ENCODE measurements at regions of chr21 and their contacts with region 1.

Region 1: DNA sequence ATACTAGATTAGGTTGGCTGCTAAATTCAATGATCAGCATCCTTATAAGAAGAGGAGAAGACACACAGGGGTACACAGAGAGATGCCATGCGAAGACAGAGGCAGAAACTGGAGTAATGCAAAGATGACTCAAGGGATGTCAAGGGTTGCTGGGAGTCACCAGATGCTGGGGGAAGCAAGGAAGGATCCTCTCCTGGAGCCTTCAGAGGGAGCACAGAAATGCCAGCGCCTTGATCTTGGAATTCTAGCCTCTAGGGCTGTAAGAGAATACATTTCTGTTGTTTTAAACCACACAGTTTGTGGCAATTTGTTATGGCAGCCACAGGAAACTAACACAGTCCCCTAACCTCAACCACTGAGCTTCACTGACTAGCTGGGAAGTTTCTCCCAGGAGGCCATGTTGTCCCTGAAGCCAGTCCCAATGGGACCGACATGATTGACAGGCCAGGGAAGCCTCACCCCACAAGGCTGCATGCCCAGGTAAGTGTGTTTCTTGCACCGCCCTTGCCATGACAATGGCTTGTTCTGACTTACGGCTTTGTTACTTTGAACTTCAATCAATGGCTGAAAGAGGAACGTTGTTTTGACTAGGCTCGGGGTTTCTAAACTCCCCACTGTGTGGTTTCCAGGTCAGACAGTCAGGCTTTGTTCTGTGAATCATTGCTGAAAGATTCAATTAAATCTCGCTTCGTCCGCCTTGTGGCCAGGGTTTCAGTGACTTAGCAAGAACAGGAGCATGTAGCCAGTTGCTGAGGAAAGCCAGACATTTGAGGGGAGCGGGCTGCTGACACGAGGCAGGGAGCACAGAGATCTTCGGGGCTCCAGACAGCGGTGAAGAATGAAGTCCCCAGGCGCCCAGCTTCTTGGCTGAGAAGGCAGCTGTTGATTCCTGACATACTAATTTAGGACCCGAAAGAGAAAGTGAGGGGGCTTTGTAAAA is 62.3 kb downstream of the RUNX1 start:
- DNase-seq: peak; percentile 45
- ATAC-seq: peak; percentile 56
- H3K4me3 ChIP-seq: peak overlapping the region in 2 of 5 experiments; percentile 16 to 31
- H3K4me3 Mint-ChIP-seq: peak overlapping the region; percentile 65
- H3K27ac ChIP-seq: peak overlapping the region in 1 of 2 donors; percentile 65
- H3K27ac Mint-ChIP-seq: peak overlapping the region; percentile 77
- H3K4me1 ChIP-seq: peaks cover 49 to 50% of the 10 kb centered on the region in 2 donors
- H3K4me1 Mint-ChIP-seq: peaks cover 75% of the 10 kb centered on the region
- H3K27me3 ChIP-seq: no peaks in the 10 kb centered on the region
- H3K27me3 Mint-ChIP-seq: no peaks in the 10 kb centered on the region
- CTCF ChIP-seq: no peak

Region 2: GRCh38 chr21:34795175-34795547 is 191.7 kb before region 1 on chr21:
- CTCF ChIA-PET with region 1: no interaction called
- POLR2A ChIA-PET with region 1: no interaction called
- intact Hi-C with region 1: no loop called
- DNase-seq: no peak
- ATAC-seq: no peak
- H3K4me3 ChIP-seq: no peak overlapping the region
- H3K4me3 Mint-ChIP-seq: no peak overlapping the region
- H3K27ac ChIP-seq: no peak overlapping the region
- H3K27ac Mint-ChIP-seq: no peak overlapping the region
- H3K4me1 ChIP-seq: no peaks in the 10 kb centered on the region
- H3K4me1 Mint-ChIP-seq: no peaks in the 10 kb centered on the region
- H3K27me3 ChIP-seq: no peaks in the 10 kb centered on the region
- H3K27me3 Mint-ChIP-seq: no peaks in the 10 kb centered on the region
- CTCF ChIP-seq: no peak

Region 3: GRCh38 chr21:34933609-34934335 is 53.1 kb before region 1 on chr21:
- CTCF ChIA-PET with region 1: interaction called, 3 read pairs
- POLR2A ChIA-PET with region 1: no interaction called
- intact Hi-C with region 1: loop called (anchors 10 kb)
- DNase-seq: peak; percentile 76
- ATAC-seq: peak; percentile 98
- H3K4me3 ChIP-seq: peak overlapping the region; percentile 14 to 63 (median 43)
- H3K4me3 Mint-ChIP-seq: peak overlapping the region; percentile 83
- H3K27ac ChIP-seq: peak overlapping the region; percentile 83 to 92
- H3K27ac Mint-ChIP-seq: peak overlapping the region; percentile 93
- H3K4me1 ChIP-seq: peaks cover 37 to 40% of the 10 kb centered on the region in 2 donors
- H3K4me1 Mint-ChIP-seq: peaks cover 72% of the 10 kb centered on the region
- H3K27me3 ChIP-seq: no peaks in the 10 kb centered on the region
- H3K27me3 Mint-ChIP-seq: no peaks in the 10 kb centered on the region
- CTCF ChIP-seq: no peak

Region 4: DNA sequence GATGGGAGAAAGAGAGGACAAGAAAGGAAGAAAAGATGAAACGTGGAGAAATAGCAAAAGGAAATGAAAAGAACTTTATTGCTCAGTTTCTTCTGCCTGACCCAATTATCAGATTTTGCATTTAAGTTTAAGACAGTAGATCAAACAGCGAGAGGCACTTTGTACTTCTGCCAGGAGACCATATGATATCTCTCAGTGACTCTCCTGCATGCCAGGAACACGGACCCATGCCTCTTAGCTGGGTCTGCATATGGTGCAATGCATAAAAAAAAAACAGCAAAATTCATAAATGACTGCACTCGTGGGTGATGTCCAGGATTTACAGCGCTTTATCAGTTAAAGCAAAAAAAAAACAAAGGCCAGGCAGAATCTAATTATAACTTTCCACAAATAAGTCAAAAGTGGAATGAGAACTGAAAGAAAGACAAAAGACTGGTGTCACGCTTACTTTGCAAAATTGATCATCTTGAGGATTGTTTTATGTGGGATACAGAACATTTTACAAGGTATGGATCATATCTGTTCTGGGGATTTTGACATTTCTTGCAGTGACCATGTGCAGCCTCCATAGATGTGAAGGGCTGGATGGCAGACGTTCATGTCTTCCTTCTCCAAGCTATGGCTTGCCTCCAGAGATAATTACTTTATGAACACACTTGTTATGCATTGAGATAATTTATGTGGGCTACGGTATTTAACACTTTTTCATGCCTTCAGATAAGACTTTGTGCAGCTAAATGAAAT is 17.2 kb before region 1 on chr21:
- CTCF ChIA-PET with region 1: no interaction called
- POLR2A ChIA-PET with region 1: no interaction called
- intact Hi-C with region 1: loop called (anchors 2 kb)
- DNase-seq: no peak
- ATAC-seq: no peak
- H3K4me3 ChIP-seq: no peak overlapping the region
- H3K4me3 Mint-ChIP-seq: no peak overlapping the region
- H3K27ac ChIP-seq: no peak overlapping the region
- H3K27ac Mint-ChIP-seq: peak overlapping the region; percentile 8
- H3K4me1 ChIP-seq: peaks cover 20 to 21% of the 10 kb centered on the region in 2 donors
- H3K4me1 Mint-ChIP-seq: peaks cover 51% of the 10 kb centered on the region
- H3K27me3 ChIP-seq: no peaks in the 10 kb centered on the region
- H3K27me3 Mint-ChIP-seq: no peaks in the 10 kb centered on the region
- CTCF ChIP-seq: no peak

Region 5: GRCh38 chr21:35026617-35027562 is 40.1 kb after region 1 on chr21:
- CTCF ChIA-PET with region 1: interaction called, 4 read pairs
- POLR2A ChIA-PET with region 1: no interaction called
- intact Hi-C with region 1: loop called (anchors 5 kb)
- DNase-seq: peak; percentile 90
- ATAC-seq: peak; percentile 91
- H3K4me3 ChIP-seq: peak overlapping the region; percentile 11 to 65 (median 53)
- H3K4me3 Mint-ChIP-seq: peak overlapping the region; percentile 92
- H3K27ac ChIP-seq: peak overlapping the region; percentile 46 to 87
- H3K27ac Mint-ChIP-seq: peak overlapping the region; percentile 99
- H3K4me1 ChIP-seq: peaks cover 42 to 45% of the 10 kb centered on the region in 2 donors
- H3K4me1 Mint-ChIP-seq: peaks cover 63% of the 10 kb centered on the region
- H3K27me3 ChIP-seq: no peaks in the 10 kb centered on the region
- H3K27me3 Mint-ChIP-seq: no peaks in the 10 kb centered on the region
- CTCF ChIP-seq: no peak

Region 6: DNA sequence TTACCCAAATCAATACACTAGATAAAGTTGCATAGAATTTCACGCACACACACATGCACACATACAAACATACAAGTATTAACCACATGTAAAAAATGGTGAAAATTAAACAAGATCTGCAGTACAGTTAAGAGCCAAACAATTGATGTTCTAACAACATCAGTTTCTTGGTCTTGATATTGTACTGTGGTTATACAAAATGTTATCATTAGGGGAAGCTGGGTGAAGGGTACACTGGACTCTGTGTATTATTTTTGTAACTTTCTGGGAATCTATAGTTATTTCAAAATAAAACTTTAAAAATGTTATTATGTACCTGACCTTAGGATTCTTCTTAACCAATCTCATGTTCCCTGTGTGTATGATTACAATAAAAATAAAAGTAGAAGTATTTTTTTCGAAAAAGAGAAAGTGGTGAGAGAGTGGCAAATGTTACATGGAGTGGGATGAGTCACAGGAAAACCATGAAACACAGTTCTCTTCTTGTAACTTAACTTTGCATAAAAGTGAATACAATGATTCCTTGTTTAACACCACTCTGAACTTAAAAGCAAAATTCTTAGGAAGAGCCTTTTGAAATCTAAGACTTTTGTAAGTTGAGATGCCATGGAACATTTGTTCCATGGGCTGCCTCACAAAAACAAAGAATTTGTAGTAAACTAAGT is 163.9 kb after region 1 on chr21:
- CTCF ChIA-PET with region 1: no interaction called
- POLR2A ChIA-PET with region 1: no interaction called
- intact Hi-C with region 1: no loop called
- DNase-seq: no peak
- ATAC-seq: no peak
- H3K4me3 ChIP-seq: no peak overlapping the region
- H3K4me3 Mint-ChIP-seq: no peak overlapping the region
- H3K27ac ChIP-seq: no peak overlapping the region
- H3K27ac Mint-ChIP-seq: no peak overlapping the region
- H3K4me1 ChIP-seq: no peaks in the 10 kb centered on the region
- H3K4me1 Mint-ChIP-seq: no peaks in the 10 kb centered on the region
- H3K27me3 ChIP-seq: no peaks in the 10 kb centered on the region
- H3K27me3 Mint-ChIP-seq: peaks cover 10% of the 10 kb centered on the region
- CTCF ChIP-seq: no peak

Region 7: GRCh38 chr21:36825683-36826082 is 1838.9 kb after region 1 on chr21:
- CTCF ChIA-PET with region 1: no interaction called
- POLR2A ChIA-PET with region 1: no interaction called
- intact Hi-C with region 1: no loop called
- DNase-seq: no peak
- ATAC-seq: no peak
- H3K4me3 ChIP-seq: no peak overlapping the region
- H3K4me3 Mint-ChIP-seq: no peak overlapping the region
- H3K27ac ChIP-seq: no peak overlapping the region
- H3K27ac Mint-ChIP-seq: no peak overlapping the region
- H3K4me1 ChIP-seq: no peaks in the 10 kb centered on the region
- H3K4me1 Mint-ChIP-seq: no peaks in the 10 kb centered on the region
- H3K27me3 ChIP-seq: no peaks in the 10 kb centered on the region
- H3K27me3 Mint-ChIP-seq: no peaks in the 10 kb centered on the region
- CTCF ChIP-seq: no peak